ENCODE measurements at regions of chr19 and their contacts with region 1.

Region 1: DNA sequence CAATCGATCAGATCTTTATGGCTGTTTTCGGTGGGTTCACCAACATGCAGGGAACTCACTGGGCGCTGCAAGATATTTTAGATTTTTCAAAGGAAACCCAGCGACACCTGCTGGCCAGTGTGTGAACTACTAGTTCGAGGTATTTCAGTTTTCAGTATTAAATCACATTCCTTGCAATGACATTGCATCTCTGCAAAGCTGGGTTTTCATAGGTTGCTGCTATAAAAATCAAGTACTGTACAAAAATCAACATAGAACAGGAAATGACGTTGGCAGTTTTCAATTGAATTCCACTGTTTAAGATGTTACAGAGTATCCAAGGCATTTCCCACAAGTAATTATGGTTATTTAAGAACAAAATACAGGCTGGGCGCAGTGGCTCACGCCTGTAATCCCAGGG is 17.6 kb downstream of the LIG1 start:
- DNase-seq: peak; percentile 56 to 90
- H3K4me3 ChIP-seq: no peak overlapping the region
- CTCF ChIP-seq: peak in 1 of 3 donors; percentile 73
- POLR2A ChIP-seq: no peak

Region 2: GRCh38 chr19:48108997-48109782 is 43.4 kb before region 1 on chr19:
- intact Hi-C with region 1: loop called (anchors 5 kb)
- DNase-seq: no peak
- H3K4me3 ChIP-seq: no peak overlapping the region
- CTCF ChIP-seq: no peak
- POLR2A ChIP-seq: no peak

Region 3: GRCh38 chr19:48216933-48217332 is 64.4 kb after region 1 on chr19:
- intact Hi-C with region 1: no loop called
- DNase-seq: peak in 1 of 2 donors; percentile 54
- H3K4me3 ChIP-seq: no peak overlapping the region
- CTCF ChIP-seq: no peak
- POLR2A ChIP-seq: no peak

Measured in lower leg skin (tissue), 4 donors.